ENCODE measurements at regions of chr20 and their contacts with region 1.

Region 1: DNA sequence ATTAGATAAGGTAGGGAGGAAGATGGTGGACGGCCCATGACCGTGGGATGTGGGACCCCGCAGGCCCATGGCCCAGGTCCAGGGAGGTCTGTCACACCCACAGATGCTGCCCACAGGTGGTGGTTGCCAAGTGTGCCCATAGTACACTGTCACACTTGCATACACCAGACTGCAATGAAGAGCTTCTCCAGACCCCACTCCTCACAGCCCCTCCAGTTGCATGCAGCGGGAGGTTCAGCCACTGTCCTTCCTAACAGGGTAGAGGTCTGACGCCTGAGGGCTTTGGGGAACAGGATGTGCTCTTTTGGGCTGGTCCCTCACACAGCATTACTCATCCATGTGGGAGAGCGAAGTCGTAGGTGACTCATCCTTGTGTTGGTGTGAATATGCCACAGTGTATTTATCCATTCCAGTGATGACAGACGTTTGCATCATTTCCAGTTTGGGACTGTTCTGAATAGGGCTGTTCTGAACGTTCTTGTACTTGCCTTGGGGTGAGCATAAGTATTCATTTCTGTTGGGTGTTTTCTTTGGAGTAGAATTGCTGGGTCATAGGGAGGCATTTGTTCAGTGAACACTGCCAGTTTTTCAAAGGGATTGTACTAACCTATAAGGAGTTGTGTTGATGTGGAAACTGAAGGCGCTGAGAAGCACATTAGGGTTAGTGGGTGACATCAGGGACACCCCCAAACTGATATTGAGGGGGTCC is 10.1 kb upstream of the PYGB start:
- DNase-seq: peak; percentile 42
- H3K4me3 Mint-ChIP-seq: peak overlapping the region; percentile 37
- H3K27ac Mint-ChIP-seq: peak overlapping the region; percentile 86
- H3K4me1 Mint-ChIP-seq: peaks cover 30% of the 10 kb centered on the region
- H3K27me3 Mint-ChIP-seq: peaks cover 7% of the 10 kb centered on the region

Region 2: DNA sequence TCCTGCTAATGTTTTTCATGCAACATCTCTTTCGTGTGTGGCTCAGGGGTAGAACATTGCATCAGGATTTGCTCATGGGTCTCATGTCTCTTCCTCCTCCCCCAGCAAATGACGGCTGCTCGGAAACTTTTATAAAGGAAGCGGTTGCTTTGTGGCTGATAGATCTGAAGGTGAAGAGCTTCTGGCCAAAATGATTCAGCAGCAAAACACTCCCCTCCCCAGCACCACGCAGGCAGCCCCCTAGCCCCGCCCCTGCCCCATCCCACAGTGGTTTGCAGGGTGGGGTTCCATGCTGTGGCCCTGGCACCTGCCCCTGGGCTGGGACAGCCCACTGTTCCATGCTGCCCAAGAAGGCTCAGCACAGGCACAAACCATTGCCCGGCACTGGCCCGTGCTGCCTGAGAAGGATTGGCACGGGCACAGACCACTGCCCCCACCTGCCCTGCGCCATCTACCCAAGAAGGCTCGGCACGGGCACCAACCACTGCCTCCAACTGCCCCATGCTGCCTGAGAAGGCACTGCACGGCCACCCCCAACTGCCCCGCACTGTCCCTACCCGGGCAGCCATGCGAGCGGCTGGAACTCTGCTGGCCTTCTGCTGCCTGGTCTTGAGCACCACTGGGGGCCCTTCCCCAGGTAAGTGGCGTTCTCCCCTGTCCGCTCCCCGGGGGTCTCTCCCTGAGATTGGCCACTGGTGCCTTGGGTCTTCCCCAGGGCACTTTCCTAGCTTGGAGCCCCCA is 288.7 kb before region 1 on chr20 and contains the start of gene CST7:
- intact Hi-C with region 1: loop called (anchors 2 kb)
- DNase-seq: peak; percentile 81
- H3K4me3 Mint-ChIP-seq: peak within 1 kb of the TSS; percentile 90
- H3K27ac Mint-ChIP-seq: peak within 1 kb of the TSS; percentile 99
- H3K4me1 Mint-ChIP-seq: peaks cover 74% of the 10 kb centered on the region
- H3K27me3 Mint-ChIP-seq: no peaks in the 10 kb centered on the region
- total RNA-seq, gene CST7: 127 and 133 TPM in 2 replicates

Region 3: DNA sequence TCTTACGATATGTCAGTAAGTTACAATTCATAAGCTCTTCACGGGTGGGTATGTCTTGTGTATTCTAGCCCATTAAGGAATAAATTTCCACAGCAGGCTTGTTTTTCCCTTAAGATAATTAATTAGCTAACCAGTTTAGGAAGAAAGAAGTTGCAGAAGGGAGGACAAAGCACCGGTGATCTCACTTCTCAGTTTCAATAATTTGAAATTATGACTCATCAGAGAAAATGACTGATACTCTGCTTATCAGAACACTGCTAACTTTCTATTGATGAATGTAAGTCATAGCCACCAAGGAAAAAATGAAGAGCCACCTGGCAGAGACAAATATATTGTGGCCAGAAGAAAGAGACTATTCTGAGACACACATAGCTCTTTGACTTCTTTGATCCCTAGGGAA is 77.3 kb before region 1 on chr20:
- intact Hi-C with region 1: loop called (anchors 2 kb)
- DNase-seq: no peak
- H3K4me3 Mint-ChIP-seq: no peak overlapping the region
- H3K27ac Mint-ChIP-seq: no peak overlapping the region
- H3K4me1 Mint-ChIP-seq: peaks cover 8% of the 10 kb centered on the region
- H3K27me3 Mint-ChIP-seq: peaks cover 7% of the 10 kb centered on the region

Region 4: DNA sequence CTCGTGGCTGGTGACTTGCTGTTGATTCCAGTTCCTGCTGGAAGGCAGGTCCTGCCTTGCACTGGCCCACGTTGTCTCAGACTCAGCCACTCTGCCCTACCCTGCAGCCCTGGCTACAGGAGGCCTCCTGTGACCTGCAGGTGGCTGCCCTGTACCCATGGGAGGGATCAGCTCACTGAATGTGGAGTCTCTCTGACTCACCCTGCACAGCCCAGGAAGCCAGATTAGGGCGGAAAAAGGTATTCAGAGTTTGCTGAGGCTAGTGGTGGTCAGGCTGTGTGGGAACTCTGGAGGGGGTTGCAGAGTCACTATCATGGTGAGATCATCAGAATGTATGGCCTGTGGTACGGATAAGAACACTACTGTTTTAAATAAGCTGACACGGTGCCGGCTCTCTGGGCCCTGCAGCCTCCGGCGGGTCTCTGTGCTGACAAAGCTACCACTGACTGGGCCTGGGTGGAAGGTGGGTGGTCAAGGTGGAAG is 14.5 kb before region 1 on chr20:
- intact Hi-C with region 1: loop called (anchors 1 kb)
- DNase-seq: no peak
- H3K4me3 Mint-ChIP-seq: no peak overlapping the region
- H3K27ac Mint-ChIP-seq: peak overlapping the region; percentile 26
- H3K4me1 Mint-ChIP-seq: peaks cover 6% of the 10 kb centered on the region
- H3K27me3 Mint-ChIP-seq: no peaks in the 10 kb centered on the region

Region 5: DNA sequence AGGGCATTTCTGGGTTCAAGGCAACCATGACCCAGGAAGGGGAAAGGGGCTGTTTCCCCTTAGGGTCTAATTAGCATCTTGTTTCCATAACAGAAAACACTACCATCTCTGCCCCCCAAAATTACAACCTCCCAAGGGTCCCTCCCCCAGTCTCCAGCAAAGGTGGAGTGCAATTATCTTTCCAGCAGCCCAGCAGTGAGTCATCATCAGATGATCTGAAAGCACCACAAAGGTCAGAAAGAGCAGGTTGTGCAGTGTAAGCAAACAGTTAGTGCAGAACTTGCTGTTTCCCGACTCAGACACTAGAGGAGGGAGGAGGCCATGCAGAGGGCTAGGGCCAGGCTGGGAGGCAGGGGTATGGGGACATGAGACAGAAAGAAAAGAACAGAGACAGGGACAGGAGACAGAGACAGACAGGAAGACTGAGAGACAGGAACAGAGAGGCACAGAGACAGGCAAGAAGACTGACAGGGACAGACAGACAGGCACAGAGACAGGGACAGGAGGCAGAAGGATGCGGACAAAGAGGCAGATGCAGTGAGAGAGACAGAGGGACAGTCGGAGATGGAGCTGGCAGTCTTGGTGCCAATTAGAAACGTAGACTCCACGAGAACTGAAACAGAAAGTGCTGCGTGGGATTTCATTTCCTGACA is 72.6 kb after region 1 on chr20:
- intact Hi-C with region 1: loop called (anchors 1 kb)
- DNase-seq: peak; percentile 61
- H3K4me3 Mint-ChIP-seq: peak overlapping the region; percentile 81
- H3K27ac Mint-ChIP-seq: peak overlapping the region; percentile 98
- H3K4me1 Mint-ChIP-seq: peaks cover 46% of the 10 kb centered on the region
- H3K27me3 Mint-ChIP-seq: no peaks in the 10 kb centered on the region

Region 6: DNA sequence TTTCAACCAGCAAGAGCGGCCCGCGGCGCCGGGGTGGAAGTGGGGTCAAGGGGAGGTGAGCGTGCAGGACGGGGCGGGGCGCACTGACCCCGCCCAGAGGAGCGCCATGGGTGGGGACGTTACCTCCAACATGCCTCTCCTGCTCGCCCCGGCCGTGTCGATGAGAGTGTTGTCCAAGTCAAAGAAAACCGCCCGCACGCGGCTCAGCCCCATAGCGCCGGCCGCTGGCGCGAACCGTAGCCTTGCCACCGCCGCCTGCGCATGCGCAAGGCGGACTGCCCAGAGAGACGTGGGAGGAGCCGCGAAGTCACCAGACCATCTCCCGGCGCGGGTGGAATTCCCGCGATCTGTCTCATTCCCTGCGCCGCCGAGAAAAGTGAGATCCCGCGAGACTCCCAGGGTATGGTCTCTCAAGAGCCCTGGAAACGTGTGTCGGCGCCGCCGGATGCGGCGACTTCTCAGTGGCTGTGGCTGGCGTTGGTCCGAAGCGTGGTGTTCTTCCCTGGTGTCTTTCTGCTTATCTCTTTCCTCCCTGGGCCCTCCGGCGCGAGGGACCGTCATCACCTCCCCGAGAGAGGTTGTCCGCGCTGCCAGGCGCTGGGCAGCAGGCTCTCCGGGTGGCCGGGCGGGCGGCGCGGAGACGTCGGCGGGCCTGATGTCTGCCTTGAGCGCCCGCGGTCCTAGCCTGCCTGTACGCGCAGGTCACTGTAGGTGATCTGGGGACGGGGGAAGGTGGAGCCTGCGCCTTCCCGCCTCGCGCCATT is 386.2 kb after region 1 on chr20 and contains the start of gene NANP:
- intact Hi-C with region 1: loop called (anchors 5 kb)
- DNase-seq: peak; percentile 85
- H3K4me3 Mint-ChIP-seq: peak within 1 kb of the TSS; percentile 91
- H3K27ac Mint-ChIP-seq: peak within 1 kb of the TSS; percentile 98
- H3K4me1 Mint-ChIP-seq: peaks cover 39% of the 10 kb centered on the region
- H3K27me3 Mint-ChIP-seq: peaks cover 4% of the 10 kb centered on the region
- total RNA-seq, gene NANP: 9.1 and 9.8 TPM in 2 replicates

Measured in activated T-helper 1 cell treated with anti-CD3 and anti-CD28 coated beads, Interleukin-12 subunit alpha, Interleukin-12 subunit beta, Interleukin-2, Interleukin-4 antibody, amounts not matched to agents 30 ng/mL and 10 ng/mL and 1 ng/mL, durations not matched to agents 14 hours and 24 hours and 36 hours (primary cell).